AG04450 (cell line): ENCODE measurements at regions of chr2 and their contacts with region 1.

Region 1: GRCh38 chr2:56183643-56184499 is at the start of gene CCDC85A:
- DNase-seq: peak; percentile 7
- H3K4me3 ChIP-seq: peak within 1 kb of the TSS; percentile 58
- H3K27ac ChIP-seq: no peak within 1 kb of the TSS
- H3K27me3 ChIP-seq: peaks cover 28% of the 10 kb centered on the region
- CTCF ChIP-seq: peak; percentile 78
- polyA plus RNA-seq, gene CCDC85A: not detected in 2 replicates

Region 2: GRCh38 chr2:56167616-56168562 is 16.0 kb before region 1 on chr2:
- CTCF ChIA-PET with region 1: interaction called, 15 read pairs
- POLR2A ChIA-PET with region 1: no interaction called
- DNase-seq: no peak
- H3K4me3 ChIP-seq: no peak overlapping the region
- H3K27ac ChIP-seq: no peak overlapping the region
- H3K27me3 ChIP-seq: no peaks in the 10 kb centered on the region
- CTCF ChIP-seq: no peak

Region 3: DNA sequence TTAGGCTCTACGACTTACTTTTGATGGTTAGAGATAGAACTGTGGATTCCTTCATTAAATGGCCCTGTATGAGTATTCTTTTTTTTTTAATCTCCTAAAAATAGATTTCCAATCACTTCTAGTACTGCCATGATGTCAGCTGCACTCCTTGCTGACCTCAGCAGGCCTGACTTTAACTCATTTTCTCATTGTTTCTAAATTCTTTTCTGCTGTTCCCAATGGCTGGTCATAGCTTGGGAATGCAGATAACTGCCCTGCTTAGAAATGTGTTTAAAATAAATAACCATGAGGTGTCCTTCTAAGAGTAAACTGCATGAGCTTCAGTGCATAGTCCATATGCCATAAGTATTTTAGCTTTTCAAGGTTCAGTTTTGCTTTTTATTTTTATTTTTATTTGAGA is 15.6 kb after region 1 on chr2:
- CTCF ChIA-PET with region 1: interaction called, 17 read pairs
- POLR2A ChIA-PET with region 1: no interaction called
- DNase-seq: no peak
- H3K4me3 ChIP-seq: no peak overlapping the region
- H3K27ac ChIP-seq: no peak overlapping the region
- H3K27me3 ChIP-seq: no peaks in the 10 kb centered on the region
- CTCF ChIP-seq: no peak

Region 4: DNA sequence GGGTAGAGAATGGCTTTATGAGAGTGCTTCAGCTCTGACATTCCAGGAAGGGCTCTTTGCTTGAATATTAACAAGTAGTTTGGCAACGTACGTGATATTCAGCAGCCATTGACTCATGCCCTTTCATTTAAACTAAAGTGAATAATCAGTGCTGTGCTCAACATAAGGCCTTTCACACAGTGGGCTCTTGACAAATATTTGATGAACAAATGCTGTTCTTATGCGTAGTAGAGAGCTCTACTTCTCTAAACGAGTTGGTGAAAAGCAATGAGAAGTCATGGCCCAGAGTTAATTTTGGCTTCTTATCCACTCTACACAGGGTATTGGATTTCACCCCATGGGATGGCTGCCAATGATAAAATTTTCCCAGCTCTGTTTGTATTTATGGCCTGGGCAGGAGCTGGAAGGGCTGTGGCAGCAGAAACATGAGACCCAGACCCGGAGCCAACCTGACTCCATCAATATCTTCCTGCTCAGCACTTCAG is 338.8 kb after region 1 on chr2:
- CTCF ChIA-PET with region 1: no interaction called
- POLR2A ChIA-PET with region 1: no interaction called
- DNase-seq: no peak
- H3K4me3 ChIP-seq: no peak overlapping the region
- H3K27ac ChIP-seq: no peak overlapping the region
- H3K27me3 ChIP-seq: no peaks in the 10 kb centered on the region
- CTCF ChIP-seq: no peak

Region 5: DNA sequence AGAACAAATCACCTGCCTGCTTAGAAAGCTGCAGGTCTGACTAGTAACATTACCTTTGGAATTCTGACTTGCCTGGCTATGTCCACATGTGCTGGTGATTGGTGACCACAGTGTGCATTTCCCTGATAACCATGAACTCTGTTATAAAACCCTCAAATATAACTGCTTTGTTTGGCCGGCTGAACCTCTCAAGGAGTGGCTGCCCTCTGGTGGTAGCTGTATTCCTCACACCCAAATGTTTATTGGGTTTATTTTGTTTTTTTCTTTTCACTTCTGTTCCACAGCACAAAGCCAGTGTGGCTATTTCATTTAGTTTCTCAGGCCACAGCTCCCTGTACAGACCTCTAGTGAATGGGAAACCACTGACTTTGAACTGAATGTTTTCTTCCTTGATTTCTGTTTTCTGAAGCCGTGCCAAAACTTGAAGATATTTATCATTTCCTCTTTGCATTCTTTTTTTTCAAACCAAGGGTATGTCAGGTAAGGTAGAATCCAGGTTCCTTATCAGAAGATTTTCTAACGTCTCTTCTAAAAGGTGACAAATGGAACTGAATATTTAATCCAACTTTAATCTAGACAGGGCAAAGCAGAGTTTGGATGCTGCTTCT is 1313.7 kb after region 1 on chr2:
- CTCF ChIA-PET with region 1: interaction called, 13 read pairs
- POLR2A ChIA-PET with region 1: no interaction called
- DNase-seq: no peak
- H3K4me3 ChIP-seq: no peak overlapping the region
- H3K27ac ChIP-seq: no peak overlapping the region
- H3K27me3 ChIP-seq: no peaks in the 10 kb centered on the region
- CTCF ChIP-seq: peak; percentile 72

Region 6: GRCh38 chr2:57516698-57517340 is 1332.9 kb after region 1 on chr2:
- CTCF ChIA-PET with region 1: interaction called, 20 read pairs
- POLR2A ChIA-PET with region 1: no interaction called
- DNase-seq: peak; percentile 0
- H3K4me3 ChIP-seq: no peak overlapping the region
- H3K27ac ChIP-seq: no peak overlapping the region
- H3K27me3 ChIP-seq: no peaks in the 10 kb centered on the region
- CTCF ChIP-seq: peak; percentile 57